SK-N-SH (cell line): ENCODE measurements at regions of chr2 and their contacts with region 1.

Region 1: GRCh38 chr2:71157124-71157793 is 26.8 kb downstream of the MPHOSPH10 start:
- DNase-seq: peak; percentile 83
- H3K4me3 ChIP-seq: peak overlapping the region in 1 of 2 experiments; percentile 55; a peak in 1 of 4 replicates
- H3K27ac ChIP-seq: no peak overlapping the region
- H3K4me1 ChIP-seq: peaks cover 0 to 9% of the 10 kb centered on the region in 2 experiments; a peak in 1 of 4 replicates
- H3K27me3 ChIP-seq: peaks cover 5% of the 10 kb centered on the region; the same call in 1 of the 2 replicates
- CTCF ChIP-seq: peak; percentile 76
- EP300 ChIP-seq: no peak
- RAD21 ChIP-seq: peak; percentile 78

Region 2: DNA sequence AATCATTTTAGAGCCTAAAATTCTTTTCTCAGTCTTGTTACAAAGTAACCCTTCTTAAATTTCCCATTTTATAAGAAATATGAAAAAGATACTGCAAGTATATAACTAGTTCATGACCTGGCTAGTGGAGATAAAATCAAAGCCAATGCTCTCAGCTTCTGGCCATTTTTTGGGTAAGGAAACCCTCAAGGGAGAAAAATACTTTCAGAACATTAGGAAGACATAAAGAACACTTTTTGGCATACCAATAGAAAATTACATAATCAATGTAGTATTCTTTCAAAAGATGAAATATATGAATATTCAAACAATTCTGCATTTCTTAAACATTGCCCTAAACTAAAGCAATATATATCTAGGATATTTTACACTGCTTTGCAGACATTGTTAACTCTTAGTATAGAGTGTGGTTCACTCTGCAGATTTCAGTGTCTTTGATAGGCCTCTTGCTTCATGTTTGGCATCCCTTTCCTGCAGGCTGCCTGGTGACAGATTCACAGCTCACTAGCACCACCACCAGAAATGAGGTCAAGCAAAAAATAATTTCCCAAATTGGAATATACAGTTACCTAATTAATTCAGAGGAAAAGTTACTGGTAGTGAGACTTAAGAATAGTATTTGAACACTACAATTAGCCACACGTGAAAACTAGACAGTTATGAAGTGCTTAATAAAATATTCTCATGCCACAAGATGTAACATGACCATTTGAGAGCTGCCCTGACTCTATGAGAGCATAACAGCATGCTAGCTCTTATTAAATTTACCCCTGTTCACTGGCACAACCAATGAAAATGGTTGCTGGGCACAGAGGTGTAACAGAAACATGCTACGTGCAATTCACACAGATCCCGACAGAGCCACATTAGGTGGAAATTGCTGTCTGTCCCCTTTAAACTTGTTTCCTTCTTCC is 33.7 kb after region 1 on chr2:
- CTCF ChIA-PET with region 1: interaction called, 17 read pairs
- POLR2A ChIA-PET with region 1: interaction called, 4 read pairs
- DNase-seq: peak; percentile 24
- H3K4me3 ChIP-seq: no peak overlapping the region
- H3K27ac ChIP-seq: no peak overlapping the region
- H3K4me1 ChIP-seq: peaks cover 0 to 2% of the 10 kb centered on the region in 2 experiments; a peak in 1 of 4 replicates
- H3K27me3 ChIP-seq: no peaks in the 10 kb centered on the region; the same call in 1 of the 2 replicates
- CTCF ChIP-seq: peak; percentile 44
- EP300 ChIP-seq: no peak
- RAD21 ChIP-seq: peak; percentile 67